MCF 10A (cell line): ENCODE measurements at regions of chr7 and their contacts with region 1.

Region 1: GRCh38 chr7:99408379-99409191 is at the starts of genes BUD31 and PDAP1:
- DNase-seq: peak; percentile 91
- H3K4me3 Mint-ChIP-seq: peak within 1 kb of the TSS; percentile 97
- H3K27ac Mint-ChIP-seq: peak within 1 kb of the TSS; percentile 98
- H3K4me1 Mint-ChIP-seq: peaks cover 30% of the 10 kb centered on the region
- H3K27me3 Mint-ChIP-seq: no peaks in the 10 kb centered on the region
- CTCF ChIP-seq: no peak
- total RNA-seq, gene BUD31: 224 and 262 TPM in 2 replicates
- total RNA-seq, gene PDAP1: 155 and 200 TPM in 2 replicates

Region 2: GRCh38 chr7:98157761-98158160 is 1250.8 kb before region 1 on chr7:
- CTCF ChIA-PET with region 1: no interaction called
- POLR2A ChIA-PET with region 1: no interaction called
- intact Hi-C with region 1: no loop called
- DNase-seq: no peak
- H3K4me3 Mint-ChIP-seq: no peak overlapping the region
- H3K27ac Mint-ChIP-seq: no peak overlapping the region
- H3K4me1 Mint-ChIP-seq: no peaks in the 10 kb centered on the region
- H3K27me3 Mint-ChIP-seq: no peaks in the 10 kb centered on the region
- CTCF ChIP-seq: no peak

Region 3: DNA sequence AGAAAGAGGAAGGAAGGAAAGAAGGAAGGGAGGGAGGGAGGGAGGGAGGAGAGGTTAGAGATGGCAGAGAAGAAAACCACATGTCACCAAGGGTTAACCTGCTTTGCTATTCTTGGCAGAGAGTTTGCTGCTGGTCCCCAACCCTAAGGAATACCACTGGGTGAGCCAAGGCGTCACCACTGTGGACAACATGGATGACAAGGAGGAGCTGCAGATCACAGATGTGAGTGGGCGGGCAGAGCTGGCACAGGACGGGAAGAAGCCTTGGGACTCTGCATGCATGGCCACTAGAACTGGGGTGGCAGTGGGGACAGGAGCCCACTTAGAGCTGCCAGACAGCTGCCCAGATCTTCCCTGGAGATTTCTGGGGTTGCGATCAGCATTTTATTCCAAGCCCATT is 153.1 kb before region 1 on chr7:
- CTCF ChIA-PET with region 1: no interaction called
- POLR2A ChIA-PET with region 1: no interaction called
- intact Hi-C with region 1: no loop called
- DNase-seq: no peak
- H3K4me3 Mint-ChIP-seq: no peak overlapping the region
- H3K27ac Mint-ChIP-seq: no peak overlapping the region
- H3K4me1 Mint-ChIP-seq: peaks cover 7% of the 10 kb centered on the region
- H3K27me3 Mint-ChIP-seq: no peaks in the 10 kb centered on the region
- CTCF ChIP-seq: no peak

Region 4: DNA sequence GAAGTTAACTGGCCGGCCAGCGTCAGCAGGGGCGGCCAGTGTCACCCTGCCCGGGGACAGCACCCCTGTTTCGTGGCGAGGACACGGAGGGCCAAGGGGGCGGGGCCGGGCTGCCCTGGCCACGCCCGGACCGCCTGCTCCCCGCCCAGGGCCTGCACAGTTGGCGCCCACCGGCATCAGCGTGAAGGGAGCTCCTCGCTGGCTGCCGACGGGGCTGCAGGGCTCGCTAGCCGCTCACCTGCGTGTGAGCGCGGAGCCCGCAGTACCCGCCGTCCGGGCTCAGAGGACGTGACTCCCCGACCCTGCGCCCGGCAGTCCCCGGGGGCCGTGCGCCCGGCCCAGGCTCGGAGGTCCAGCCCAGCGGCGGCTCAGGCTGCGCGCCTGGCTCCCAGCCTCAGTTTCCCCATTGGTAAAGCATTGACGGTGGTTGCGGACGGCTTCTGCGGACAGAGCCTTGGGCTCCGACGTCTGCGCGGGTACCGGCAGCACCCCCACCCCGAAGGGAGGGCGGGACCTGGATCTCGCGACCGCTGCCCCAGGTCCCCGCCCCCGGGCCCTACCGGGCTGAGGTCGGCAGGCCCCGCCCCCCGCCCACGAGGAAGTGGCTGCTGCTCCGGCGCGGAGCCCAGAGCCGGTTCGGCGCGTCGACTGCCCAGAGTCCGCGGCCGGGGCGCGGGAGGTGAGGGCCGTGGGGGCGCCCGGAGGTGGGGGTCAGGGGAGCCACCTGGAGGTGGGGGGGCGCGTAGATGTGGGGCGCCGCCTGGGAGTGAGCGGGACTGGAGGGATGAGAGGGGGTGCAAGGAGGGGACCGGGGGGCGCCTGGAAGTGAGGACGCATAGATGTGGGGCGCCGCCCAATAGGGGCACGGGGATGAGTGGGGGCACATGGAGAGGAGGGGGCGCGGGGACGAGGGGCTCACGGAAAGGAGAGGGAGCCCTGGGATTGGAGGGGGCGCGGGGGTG is 34.2 kb before region 1 on chr7 and contains the start of gene ARPC1B:
- CTCF ChIA-PET with region 1: interaction called, 4 read pairs
- POLR2A ChIA-PET with region 1: interaction called, 46 read pairs
- intact Hi-C with region 1: loop called (anchors 2 kb)
- DNase-seq: peak; percentile 73
- H3K4me3 Mint-ChIP-seq: peak within 1 kb of the TSS; percentile 70
- H3K27ac Mint-ChIP-seq: peak within 1 kb of the TSS; percentile 39
- H3K4me1 Mint-ChIP-seq: peaks cover 6% of the 10 kb centered on the region
- H3K27me3 Mint-ChIP-seq: no peaks in the 10 kb centered on the region
- CTCF ChIP-seq: no peak
- total RNA-seq, gene ARPC1B: 174 and 192 TPM in 2 replicates

Region 5: GRCh38 chr7:99380032-99380822 is 28.4 kb before region 1 on chr7:
- CTCF ChIA-PET with region 1: interaction called, 4 read pairs
- POLR2A ChIA-PET with region 1: interaction called, 46 read pairs
- intact Hi-C with region 1: loop called (anchors 2 kb)
- DNase-seq: peak; percentile 52
- H3K4me3 Mint-ChIP-seq: peak overlapping the region; percentile 55
- H3K27ac Mint-ChIP-seq: peak overlapping the region; percentile 79
- H3K4me1 Mint-ChIP-seq: peaks cover 18% of the 10 kb centered on the region
- H3K27me3 Mint-ChIP-seq: no peaks in the 10 kb centered on the region
- CTCF ChIP-seq: no peak

Region 6: GRCh38 chr7:99392677-99393354 is 15.8 kb before region 1 on chr7:
- CTCF ChIA-PET with region 1: interaction called, 3 read pairs
- POLR2A ChIA-PET with region 1: interaction called, 12 read pairs
- intact Hi-C with region 1: no loop called
- DNase-seq: no peak
- H3K4me3 Mint-ChIP-seq: no peak overlapping the region
- H3K27ac Mint-ChIP-seq: no peak overlapping the region
- H3K4me1 Mint-ChIP-seq: no peaks in the 10 kb centered on the region
- H3K27me3 Mint-ChIP-seq: no peaks in the 10 kb centered on the region
- CTCF ChIP-seq: no peak

Region 7: GRCh38 chr7:99419323-99420021 is 10.9 kb after region 1 on chr7:
- CTCF ChIA-PET with region 1: no interaction called
- POLR2A ChIA-PET with region 1: interaction called, 15 read pairs
- intact Hi-C with region 1: no loop called
- DNase-seq: no peak
- H3K4me3 Mint-ChIP-seq: no peak overlapping the region
- H3K27ac Mint-ChIP-seq: no peak overlapping the region
- H3K4me1 Mint-ChIP-seq: peaks cover 10% of the 10 kb centered on the region
- H3K27me3 Mint-ChIP-seq: no peaks in the 10 kb centered on the region
- CTCF ChIP-seq: no peak

Region 8: DNA sequence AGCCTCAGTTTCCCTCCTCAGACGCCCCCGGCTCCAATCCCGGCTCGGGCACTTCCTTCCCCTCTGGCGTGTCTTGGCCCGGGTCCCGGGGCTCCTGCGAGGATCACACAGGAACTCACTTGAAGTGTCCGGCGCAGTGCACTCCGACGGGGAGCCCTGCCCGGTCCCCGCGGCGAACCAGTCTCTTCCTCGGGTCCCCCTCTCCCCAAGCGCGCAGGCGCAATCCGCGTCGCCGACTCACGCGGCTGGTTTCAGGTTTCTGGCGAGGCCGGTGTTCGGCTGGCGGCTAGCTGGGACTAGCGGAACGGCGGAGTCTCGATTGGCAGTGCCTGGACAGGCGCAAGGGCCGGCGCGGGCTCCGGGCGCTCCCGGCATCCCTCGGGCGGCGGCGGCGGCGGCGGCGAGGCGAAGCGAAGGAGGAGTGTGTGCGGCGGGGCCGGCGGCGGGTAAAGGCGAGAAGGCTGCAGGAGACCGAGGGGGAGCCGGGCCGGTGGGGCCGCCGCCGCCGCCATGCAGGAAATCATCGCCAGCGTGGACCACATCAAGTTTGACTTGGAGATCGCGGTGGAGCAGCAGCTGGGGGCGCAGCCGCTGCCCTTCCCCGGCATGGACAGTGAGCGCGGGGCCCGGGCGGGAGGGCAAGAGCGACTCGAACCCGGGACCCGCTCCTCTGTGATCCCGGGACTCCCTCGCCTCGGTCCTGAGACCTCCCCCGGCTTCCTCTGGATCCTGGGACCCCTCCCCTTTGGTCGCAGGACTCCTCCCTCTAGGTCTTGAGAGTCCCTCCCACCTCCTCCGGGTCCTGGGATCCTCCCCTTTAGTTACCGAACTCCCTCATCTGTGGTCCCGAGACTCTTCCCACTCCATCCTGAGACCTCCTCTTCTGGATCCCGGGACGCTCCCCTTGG is 30.2 kb after region 1 on chr7 and contains the starts of genes CPSF4 and PTCD1:
- CTCF ChIA-PET with region 1: no interaction called
- POLR2A ChIA-PET with region 1: interaction called, 33 read pairs
- intact Hi-C with region 1: no loop called
- DNase-seq: peak; percentile 96
- H3K4me3 Mint-ChIP-seq: peak within 1 kb of the TSS; percentile 94
- H3K27ac Mint-ChIP-seq: peak within 1 kb of the TSS; percentile 97
- H3K4me1 Mint-ChIP-seq: peaks cover 5% of the 10 kb centered on the region
- H3K27me3 Mint-ChIP-seq: no peaks in the 10 kb centered on the region
- CTCF ChIP-seq: no peak
- total RNA-seq, gene CPSF4: 49.5 and 62.6 TPM in 2 replicates
- total RNA-seq, gene PTCD1: 4.9 and 8.6 TPM in 2 replicates

Region 9: DNA sequence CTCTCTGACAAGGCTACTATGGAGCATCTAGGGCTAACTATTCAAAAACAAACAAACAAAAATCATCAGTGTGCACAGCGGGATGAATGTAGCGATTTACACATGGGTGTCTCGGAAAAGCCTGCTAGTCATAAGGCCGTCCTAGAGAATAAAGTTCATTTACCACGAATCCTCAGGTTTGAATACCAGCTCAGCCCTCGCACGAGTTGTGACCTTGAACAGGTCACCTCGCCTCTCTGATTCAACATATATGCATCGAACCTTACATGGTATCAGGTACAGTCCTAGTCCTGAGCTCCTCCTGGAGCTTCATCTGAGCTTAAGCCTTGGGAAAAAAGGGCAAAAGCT is 56.8 kb after region 1 on chr7:
- CTCF ChIA-PET with region 1: no interaction called
- POLR2A ChIA-PET with region 1: interaction called, 19 read pairs
- intact Hi-C with region 1: no loop called
- DNase-seq: peak; percentile 14
- H3K4me3 Mint-ChIP-seq: peak overlapping the region; percentile 89
- H3K27ac Mint-ChIP-seq: peak overlapping the region; percentile 98
- H3K4me1 Mint-ChIP-seq: peaks cover 15% of the 10 kb centered on the region
- H3K27me3 Mint-ChIP-seq: no peaks in the 10 kb centered on the region
- CTCF ChIP-seq: no peak

Region 10: DNA sequence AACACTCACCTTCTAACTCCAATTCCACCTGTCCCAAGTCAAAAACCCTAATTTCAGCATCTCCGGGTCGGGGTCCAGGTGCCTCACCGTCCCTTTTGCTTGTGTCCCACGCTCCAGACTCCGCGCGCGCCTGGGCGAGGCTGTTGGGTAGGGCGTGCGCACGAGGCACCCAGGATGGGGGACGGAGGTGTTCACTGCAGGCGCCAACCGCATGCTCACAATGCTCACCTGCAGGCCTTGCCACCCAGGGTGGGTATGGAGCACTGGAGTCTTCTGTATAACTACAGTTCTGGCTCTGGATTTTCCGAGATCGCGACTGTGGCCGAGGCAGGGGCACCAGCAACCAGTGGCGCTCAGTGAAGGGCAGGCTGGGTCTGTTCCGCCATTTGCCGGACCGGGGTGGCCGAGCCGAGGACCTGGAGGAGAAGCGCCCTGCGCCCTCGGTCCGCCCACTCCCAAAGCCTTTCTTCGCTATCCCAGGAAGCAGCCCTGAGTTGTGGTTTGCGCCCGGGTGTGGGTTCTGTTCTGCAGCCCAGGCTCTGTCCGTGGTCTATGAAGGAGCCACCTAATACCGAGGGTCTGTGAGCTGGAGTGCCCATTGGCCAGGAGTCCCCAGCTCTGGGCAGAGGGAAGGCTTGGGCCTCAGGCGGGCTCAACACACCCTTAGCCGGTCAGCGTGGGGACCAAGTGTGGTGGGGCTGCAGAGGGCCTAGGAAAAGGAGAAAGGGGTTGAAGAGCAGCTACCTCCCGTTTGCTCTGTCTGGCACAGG is 134.7 kb after region 1 on chr7:
- CTCF ChIA-PET with region 1: no interaction called
- POLR2A ChIA-PET with region 1: no interaction called
- intact Hi-C with region 1: no loop called
- DNase-seq: no peak
- H3K4me3 Mint-ChIP-seq: no peak overlapping the region
- H3K27ac Mint-ChIP-seq: no peak overlapping the region
- H3K4me1 Mint-ChIP-seq: no peaks in the 10 kb centered on the region
- H3K27me3 Mint-ChIP-seq: no peaks in the 10 kb centered on the region
- CTCF ChIP-seq: no peak